Activated B cell treated with CpG ODN at 0.5 μM for 24 hours (primary cell): ENCODE measurements at regions of chr15 and their contacts with region 1.

Region 1: GRCh38 chr15:85520650-85521049 is 140.2 kb downstream of the AKAP13 start:
- DNase-seq: no peak
- ATAC-seq: no peak
- H3K4me3 Mint-ChIP-seq: no peak overlapping the region
- H3K27ac Mint-ChIP-seq: no peak overlapping the region
- H3K4me1 Mint-ChIP-seq: peaks cover 53% of the 10 kb centered on the region
- H3K27me3 Mint-ChIP-seq: no peaks in the 10 kb centered on the region
- CTCF ChIP-seq: no peak

Region 2: DNA sequence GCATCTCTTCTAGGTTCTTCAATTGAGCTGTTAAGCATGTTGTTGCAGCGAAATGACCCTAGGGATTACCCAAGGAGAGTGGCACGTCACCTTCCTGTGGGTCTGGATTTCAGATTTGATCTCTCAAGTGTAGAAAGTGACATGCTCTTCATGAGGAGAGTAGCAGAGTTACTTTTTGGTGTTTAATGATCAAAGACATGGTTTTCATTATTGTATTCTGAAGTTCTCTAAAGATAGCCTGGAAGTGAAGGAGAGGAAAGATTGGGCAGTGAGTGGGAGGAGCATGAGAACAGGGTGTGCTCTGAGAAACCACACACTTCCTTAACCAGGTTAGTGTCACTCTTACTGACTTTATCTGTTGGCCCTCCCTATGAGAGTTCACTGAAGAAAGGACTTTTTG is 13.4 kb after region 1 on chr15:
- CTCF ChIA-PET with region 1: no interaction called
- POLR2A ChIA-PET with region 1: no interaction called
- intact Hi-C with region 1: loop called (anchors 2 kb)
- DNase-seq: no peak
- ATAC-seq: peak; percentile 77
- H3K4me3 Mint-ChIP-seq: peak overlapping the region; percentile 63
- H3K27ac Mint-ChIP-seq: peak overlapping the region; percentile 87
- H3K4me1 Mint-ChIP-seq: peaks cover 84% of the 10 kb centered on the region
- H3K27me3 Mint-ChIP-seq: no peaks in the 10 kb centered on the region
- CTCF ChIP-seq: no peak

Region 3: DNA sequence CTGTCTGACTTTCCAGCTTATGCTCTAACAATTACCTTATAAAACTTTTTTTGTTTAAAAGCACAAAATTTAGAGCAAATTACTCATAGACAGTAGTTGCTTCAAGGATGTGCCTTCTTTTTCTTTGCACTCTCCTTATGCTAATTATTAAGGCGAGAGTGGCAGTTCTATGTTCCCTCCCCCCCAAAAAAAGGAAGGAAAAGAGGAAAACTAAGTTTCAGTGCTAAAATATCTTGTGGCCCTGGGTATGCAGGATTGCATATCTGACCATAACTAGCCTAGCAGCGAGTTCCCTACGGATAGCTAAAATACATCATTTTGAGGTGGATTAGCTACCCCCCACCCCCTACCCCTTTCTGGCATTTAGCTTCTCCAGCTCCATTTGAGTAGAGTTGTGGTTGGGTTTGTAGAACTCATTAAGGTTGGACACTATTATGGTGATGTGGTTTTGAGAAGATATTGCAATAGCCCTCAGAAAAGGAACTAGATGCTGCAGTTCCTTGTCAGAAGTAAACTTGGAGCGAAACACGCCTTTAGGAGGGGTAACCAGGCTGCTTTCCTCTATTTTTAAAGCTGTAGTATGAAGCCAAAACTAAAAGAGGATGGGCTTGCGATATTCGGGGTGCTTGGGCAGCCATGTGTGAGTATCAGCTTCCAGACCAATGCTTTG is 34.3 kb after region 1 on chr15:
- CTCF ChIA-PET with region 1: no interaction called
- POLR2A ChIA-PET with region 1: no interaction called
- intact Hi-C with region 1: loop called (anchors 5 kb)
- DNase-seq: no peak
- ATAC-seq: peak; percentile 78
- H3K4me3 Mint-ChIP-seq: peak overlapping the region; percentile 42
- H3K27ac Mint-ChIP-seq: peak overlapping the region; percentile 62
- H3K4me1 Mint-ChIP-seq: peaks cover 40% of the 10 kb centered on the region
- H3K27me3 Mint-ChIP-seq: no peaks in the 10 kb centered on the region
- CTCF ChIP-seq: no peak